Endothelial cell of umbilical vein (primary cell): ENCODE measurements at regions of chr6 and their contacts with region 1.

Region 1: DNA sequence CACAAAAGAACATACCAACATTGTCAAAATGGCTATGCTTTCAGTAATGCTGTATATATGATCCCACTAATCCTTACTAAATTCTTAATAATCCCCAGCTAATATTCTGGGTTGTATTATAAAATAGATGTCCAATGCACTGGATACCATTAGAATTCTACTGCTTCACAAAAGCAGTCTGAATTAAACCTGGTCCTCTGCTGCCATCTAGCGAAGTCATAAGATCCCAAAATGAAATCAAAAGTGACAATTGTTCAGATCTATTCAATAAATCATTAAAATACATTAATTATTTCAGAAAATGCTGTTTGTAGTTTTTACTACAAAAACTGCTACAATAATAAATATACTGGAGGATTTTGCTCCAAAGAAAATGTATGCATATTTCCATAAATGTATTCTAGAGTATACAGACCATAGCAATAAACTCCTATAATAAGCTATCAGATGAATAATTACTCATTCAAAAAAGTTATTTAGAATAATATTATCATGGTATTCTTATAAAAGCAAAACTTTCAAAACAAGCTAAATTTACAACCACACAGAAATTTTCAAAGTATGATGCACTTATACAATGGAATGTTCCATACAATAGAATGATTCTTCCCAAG is 92.6 kb downstream of the RNGTT start:
- DNase-seq: peak; percentile 69
- H3K4me3 ChIP-seq: no peak overlapping the region
- H3K27ac ChIP-seq: no peak overlapping the region
- H3K4me1 ChIP-seq: peaks cover 18% of the 10 kb centered on the region
- H3K27me3 ChIP-seq: no peaks in the 10 kb centered on the region
- CTCF ChIP-seq: peak; percentile 25 to 34
- POLR2A ChIP-seq: no peak

Region 2: DNA sequence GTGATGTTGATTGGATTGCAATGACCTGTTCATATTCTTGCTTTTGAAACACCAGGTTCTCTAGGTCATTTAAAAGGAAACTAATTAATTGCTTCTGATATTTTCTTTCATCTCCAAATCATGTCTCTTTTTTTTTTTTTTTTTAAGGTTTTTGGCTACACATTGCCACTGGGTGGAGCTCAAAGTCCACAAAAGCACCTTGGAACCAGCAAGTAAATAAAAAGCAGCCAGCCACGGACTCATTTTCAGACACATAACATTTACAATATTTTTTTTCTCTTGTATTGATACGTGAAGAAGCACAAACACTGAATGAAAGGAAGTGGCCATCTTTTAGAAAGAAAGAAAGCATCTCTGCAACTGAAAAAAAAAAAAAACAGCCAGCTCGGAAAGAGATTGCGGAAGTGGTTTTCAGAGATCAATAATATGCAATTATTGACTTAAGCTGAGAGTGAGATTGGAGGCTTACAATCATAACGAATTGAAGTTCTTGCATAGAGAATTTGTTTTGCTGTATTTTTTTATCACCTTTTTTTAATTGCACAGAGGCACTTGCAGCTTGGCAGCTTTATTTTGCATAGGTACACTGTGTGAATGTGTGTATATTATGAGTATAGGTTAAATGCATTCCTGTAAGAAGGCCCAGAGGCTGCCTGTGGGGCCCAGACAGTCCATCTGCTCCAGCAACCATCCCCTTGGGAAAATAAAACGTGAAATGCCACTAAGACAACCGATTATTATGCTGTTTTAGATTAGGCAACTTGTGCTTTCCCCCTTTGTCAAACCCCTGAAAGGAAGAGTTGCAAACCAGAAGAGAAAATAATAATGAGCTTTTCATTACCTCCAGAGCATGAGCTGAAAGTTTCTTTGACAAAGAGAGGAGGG is 1804.1 kb before region 1 on chr6:
- CTCF ChIA-PET with region 1: interaction called, 43 read pairs
- POLR2A ChIA-PET with region 1: no interaction called
- dilution Hi-C with region 1: no loop called
- intact Hi-C with region 1: loop called (anchors 2 kb)
- DNase-seq: peak; percentile 70
- H3K4me3 ChIP-seq: no peak overlapping the region
- H3K27ac ChIP-seq: no peak overlapping the region
- H3K4me1 ChIP-seq: no peaks in the 10 kb centered on the region
- H3K27me3 ChIP-seq: peaks cover 13 to 16% of the 10 kb centered on the region in 2 experiments
- CTCF ChIP-seq: peak; percentile 30 to 35
- POLR2A ChIP-seq: no peak

Region 3: DNA sequence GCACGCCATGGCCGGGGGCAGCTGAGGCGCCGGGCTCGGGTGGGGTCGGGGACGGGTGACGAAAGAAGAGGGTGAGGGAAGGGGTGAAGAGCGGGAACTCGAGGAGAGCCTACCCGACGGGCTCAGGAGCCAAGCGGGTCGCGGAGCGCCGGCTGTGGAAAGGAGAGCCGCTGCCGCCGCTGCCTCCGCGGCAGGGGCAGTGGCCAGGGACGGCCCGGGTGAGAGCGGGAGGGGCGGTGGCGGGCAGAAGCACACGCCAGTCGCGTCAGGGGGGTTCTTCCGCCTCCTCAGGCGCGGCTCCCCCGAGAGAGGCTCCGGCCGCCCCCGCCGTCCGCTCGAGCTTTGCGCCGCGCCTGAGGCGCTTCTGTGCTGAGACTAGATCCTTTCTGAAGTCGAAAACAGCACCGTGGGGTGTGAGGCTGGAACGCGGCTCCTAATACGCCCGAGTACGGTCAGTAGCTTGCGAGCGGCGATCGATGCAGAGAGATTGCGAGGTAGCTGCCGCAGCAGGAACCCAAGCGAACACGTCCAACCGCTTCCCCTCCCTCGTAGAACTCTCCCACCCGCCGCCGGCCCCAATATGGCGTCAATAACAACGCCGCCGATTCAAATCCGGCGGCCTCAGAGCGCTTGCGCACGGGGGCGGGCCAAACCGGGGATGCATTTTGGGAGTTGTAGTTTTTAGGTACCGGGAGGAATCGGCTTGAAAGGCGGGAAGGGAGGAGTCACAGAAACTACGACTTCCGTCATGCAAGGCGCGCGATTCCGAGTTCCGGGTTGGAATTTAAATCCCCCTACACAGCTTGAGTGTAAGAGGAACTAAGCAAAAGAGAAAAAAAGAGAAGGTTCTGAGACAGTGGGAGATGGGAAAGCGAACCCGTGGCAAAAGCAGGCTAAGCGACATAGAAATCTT is 1168.9 kb before region 1 on chr6 and contains the start of gene AKIRIN2:
- CTCF ChIA-PET with region 1: no interaction called
- POLR2A ChIA-PET with region 1: no interaction called
- dilution Hi-C with region 1: no loop called
- intact Hi-C with region 1: loop called (anchors 10 kb)
- DNase-seq: peak; percentile 100
- H3K4me3 ChIP-seq: peak within 1 kb of the TSS; percentile 95 to 100 (median 97)
- H3K27ac ChIP-seq: peak within 1 kb of the TSS; percentile 62
- H3K4me1 ChIP-seq: peaks cover 30% of the 10 kb centered on the region
- H3K27me3 ChIP-seq: no peaks in the 10 kb centered on the region
- CTCF ChIP-seq: no peak
- POLR2A ChIP-seq: peak; percentile 92
- total RNA-seq, gene AKIRIN2: 46.1 and 46.4 TPM in 2 replicates

Region 4: DNA sequence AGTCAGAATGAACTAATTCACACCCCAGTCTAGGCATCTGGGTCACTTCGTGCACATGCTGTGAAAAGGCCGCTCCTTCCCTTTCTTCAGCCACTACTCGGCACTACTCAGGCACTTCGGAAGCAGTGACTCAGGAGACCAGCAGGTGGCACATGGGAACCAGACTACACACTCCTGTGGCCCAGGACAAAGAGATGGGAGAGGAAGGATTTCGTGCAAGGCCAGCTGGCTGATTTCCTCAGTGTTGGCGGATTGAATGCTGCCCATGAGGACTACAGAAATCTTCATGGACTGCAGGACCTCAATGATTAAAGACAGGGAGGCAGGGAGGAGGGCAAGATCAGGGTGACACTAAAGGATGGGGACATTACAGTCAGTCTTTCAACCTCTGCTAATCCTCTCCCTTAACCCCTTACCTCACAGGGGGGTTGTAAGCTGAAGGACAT is 941.0 kb before region 1 on chr6:
- CTCF ChIA-PET with region 1: interaction called, 152 read pairs
- POLR2A ChIA-PET with region 1: no interaction called
- dilution Hi-C with region 1: no loop called
- intact Hi-C with region 1: loop called (anchors 1 kb)
- DNase-seq: peak; percentile 77
- H3K4me3 ChIP-seq: no peak overlapping the region
- H3K27ac ChIP-seq: no peak overlapping the region
- H3K4me1 ChIP-seq: no peaks in the 10 kb centered on the region
- H3K27me3 ChIP-seq: peaks cover 7 to 9% of the 10 kb centered on the region in 2 experiments
- CTCF ChIP-seq: peak; percentile 88
- POLR2A ChIP-seq: no peak

Region 5: GRCh38 chr6:88492824-88493223 is 378.0 kb before region 1 on chr6:
- CTCF ChIA-PET with region 1: interaction called, 28 read pairs
- POLR2A ChIA-PET with region 1: no interaction called
- dilution Hi-C with region 1: no loop called
- intact Hi-C with region 1: loop called (anchors 2 kb)
- DNase-seq: peak; percentile 41
- H3K4me3 ChIP-seq: no peak overlapping the region
- H3K27ac ChIP-seq: peak overlapping the region; percentile 11
- H3K4me1 ChIP-seq: peaks cover 4% of the 10 kb centered on the region
- H3K27me3 ChIP-seq: no peaks in the 10 kb centered on the region
- CTCF ChIP-seq: peak; percentile 40
- POLR2A ChIP-seq: no peak

Region 6: DNA sequence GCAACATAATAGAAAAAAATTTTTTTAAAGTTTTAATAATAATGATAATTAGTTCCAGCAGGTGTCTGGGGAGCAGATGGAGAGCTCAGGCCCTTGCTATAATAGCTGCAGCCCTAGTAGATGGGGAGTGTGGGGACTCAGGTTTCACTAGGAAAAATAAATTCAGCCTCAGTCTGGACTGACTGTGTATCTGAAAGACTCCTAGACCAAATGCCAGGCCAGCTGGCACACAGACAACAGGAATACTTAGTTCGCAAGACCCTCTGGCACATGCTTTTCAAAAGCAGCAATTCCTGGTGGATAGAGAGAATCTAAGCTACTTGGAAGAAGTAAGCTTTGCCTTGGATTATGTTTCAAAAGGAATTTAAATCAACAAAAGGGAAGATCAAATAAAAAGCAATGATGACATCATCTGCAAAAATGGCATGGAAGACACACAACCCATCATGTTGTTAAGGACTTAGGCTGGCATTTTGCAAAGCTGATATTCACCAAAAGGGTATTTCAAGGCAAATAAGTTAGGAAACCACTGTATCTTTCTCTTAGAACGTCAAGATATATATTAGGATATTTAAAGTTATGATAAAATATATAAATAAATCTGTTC is 15.2 kb before region 1 on chr6:
- CTCF ChIA-PET with region 1: interaction called, 19 read pairs
- POLR2A ChIA-PET with region 1: no interaction called
- dilution Hi-C with region 1: no loop called
- intact Hi-C with region 1: no loop called
- DNase-seq: no peak
- H3K4me3 ChIP-seq: no peak overlapping the region
- H3K27ac ChIP-seq: no peak overlapping the region
- H3K4me1 ChIP-seq: no peaks in the 10 kb centered on the region
- H3K27me3 ChIP-seq: no peaks in the 10 kb centered on the region
- CTCF ChIP-seq: no peak
- POLR2A ChIP-seq: no peak

Region 7: GRCh38 chr6:88919032-88919431 is 48.2 kb after region 1 on chr6:
- CTCF ChIA-PET with region 1: interaction called, 20 read pairs
- POLR2A ChIA-PET with region 1: no interaction called
- dilution Hi-C with region 1: no loop called
- intact Hi-C with region 1: no loop called
- DNase-seq: no peak
- H3K4me3 ChIP-seq: no peak overlapping the region
- H3K27ac ChIP-seq: no peak overlapping the region
- H3K4me1 ChIP-seq: no peaks in the 10 kb centered on the region
- H3K27me3 ChIP-seq: no peaks in the 10 kb centered on the region
- CTCF ChIP-seq: no peak
- POLR2A ChIP-seq: no peak